ENCODE measurements at regions of chr2 and their contacts with region 1.

Region 1: GRCh38 chr2:8380026-8380425 is 301.8 kb upstream of the ID2 start:
- DNase-seq: no peak
- H3K4me3 ChIP-seq: no peak overlapping the region
- H3K27ac ChIP-seq: no peak overlapping the region
- H3K4me1 ChIP-seq: no peaks in the 10 kb centered on the region
- H3K27me3 ChIP-seq: no peaks in the 10 kb centered on the region
- CTCF ChIP-seq: no peak
- EP300 ChIP-seq: no peak
- POLR2A ChIP-seq: no peak

Region 2: GRCh38 chr2:8058652-8059051 is 321.4 kb before region 1 on chr2:
- in situ Hi-C with region 1: no loop called
- intact Hi-C with region 1: loop called (anchors 5 kb)
- DNase-seq: no peak
- H3K4me3 ChIP-seq: no peak overlapping the region
- H3K27ac ChIP-seq: no peak overlapping the region
- H3K4me1 ChIP-seq: no peaks in the 10 kb centered on the region
- H3K27me3 ChIP-seq: no peaks in the 10 kb centered on the region
- CTCF ChIP-seq: no peak
- EP300 ChIP-seq: no peak
- POLR2A ChIP-seq: no peak

Measured in transverse colon (tissue), 4 donors.